Psoas muscle (tissue), 8 donors: ENCODE measurements at regions of chr13 and their contacts with region 1.

Region 1: GRCh38 chr13:77079902-77080413 is 53.0 kb upstream of the FBXL3 start:
- DNase-seq: no peak
- ATAC-seq: no peak
- H3K4me3 ChIP-seq: no peak overlapping the region
- H3K27ac ChIP-seq: no peak overlapping the region
- H3K4me1 ChIP-seq: no peaks in the 10 kb centered on the region
- H3K27me3 ChIP-seq: no peaks in the 10 kb centered on the region
- CTCF ChIP-seq: no peak

Region 2: DNA sequence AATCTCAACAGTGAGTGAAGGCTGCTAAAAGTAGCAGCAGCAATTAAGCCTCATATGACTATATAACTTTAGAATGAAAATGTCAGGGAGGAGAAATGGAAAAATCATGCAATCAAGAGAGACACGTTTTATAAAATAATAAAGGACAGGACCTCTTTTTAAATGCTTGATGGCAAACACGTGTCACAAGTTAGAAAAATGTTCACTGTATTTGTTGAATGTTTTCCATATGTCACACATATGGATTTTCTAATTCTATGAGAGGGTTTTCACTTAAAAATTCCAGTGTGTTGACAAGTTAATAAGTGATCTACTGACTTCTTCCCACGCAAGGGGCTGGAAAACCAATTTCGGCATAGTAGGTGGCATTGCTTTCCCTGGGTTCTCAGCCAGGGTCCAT is 166.1 kb before region 1 on chr13:
- intact Hi-C with region 1: no loop called
- DNase-seq: no peak
- ATAC-seq: no peak
- H3K4me3 ChIP-seq: no peak overlapping the region
- H3K27ac ChIP-seq: no peak overlapping the region
- H3K4me1 ChIP-seq: no peaks in the 10 kb centered on the region
- H3K27me3 ChIP-seq: peaks cover 0 to 2% (median 0%) of the 10 kb centered on the region in 3 donors
- CTCF ChIP-seq: no peak

Region 3: DNA sequence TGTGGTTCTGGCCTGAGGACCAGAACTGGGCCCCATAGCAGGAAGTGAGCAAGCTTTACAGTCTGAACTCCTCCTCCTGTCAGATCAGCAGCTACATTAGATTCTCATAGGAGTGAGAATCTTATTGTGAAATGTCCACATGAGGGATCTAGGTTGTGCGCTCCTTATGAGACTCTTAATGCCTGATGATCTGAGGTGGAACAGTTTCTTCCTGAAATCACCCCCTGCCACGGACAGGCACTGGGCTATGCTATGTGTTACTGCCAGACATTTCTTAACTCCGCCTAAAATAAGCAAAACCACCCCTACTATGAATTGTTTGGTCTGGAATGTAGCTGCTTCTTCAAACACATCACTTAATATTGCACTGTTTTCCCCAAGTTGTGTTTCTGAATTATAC is 57.6 kb before region 1 on chr13:
- intact Hi-C with region 1: no loop called
- DNase-seq: no peak
- ATAC-seq: peak in 1 of 4 donors; percentile 4
- H3K4me3 ChIP-seq: no peak overlapping the region
- H3K27ac ChIP-seq: peak overlapping the region; percentile 51
- H3K4me1 ChIP-seq: peaks cover 69% of the 10 kb centered on the region
- H3K27me3 ChIP-seq: no peaks in the 10 kb centered on the region
- CTCF ChIP-seq: no peak

Region 4: GRCh38 chr13:77168237-77168636 is 88.3 kb after region 1 on chr13:
- intact Hi-C with region 1: loop called in 1 of 2 experiments (anchors 10 kb)
- DNase-seq: no peak
- ATAC-seq: no peak
- H3K4me3 ChIP-seq: no peak overlapping the region
- H3K27ac ChIP-seq: no peak overlapping the region
- H3K4me1 ChIP-seq: no peaks in the 10 kb centered on the region
- H3K27me3 ChIP-seq: no peaks in the 10 kb centered on the region
- CTCF ChIP-seq: no peak

Region 5: DNA sequence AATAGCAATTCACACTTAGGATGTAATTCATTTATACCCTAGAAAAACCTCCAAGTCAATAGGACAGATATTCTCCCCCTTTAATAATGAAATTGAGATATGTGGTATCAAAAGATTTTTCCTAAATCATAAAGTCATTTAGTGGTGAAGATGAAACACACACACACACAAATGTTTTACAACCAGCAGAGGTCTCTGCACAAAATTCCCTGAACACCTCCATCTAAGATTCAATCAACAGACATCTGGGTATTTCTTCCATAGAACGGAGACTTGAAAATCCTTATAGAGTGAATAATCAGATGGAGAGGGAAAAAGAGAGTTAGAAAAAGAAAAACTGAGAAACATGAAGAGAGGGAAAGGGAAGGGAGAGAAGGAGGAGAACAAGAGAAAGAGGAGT is 194.2 kb after region 1 on chr13:
- intact Hi-C with region 1: no loop called
- DNase-seq: no peak
- ATAC-seq: no peak
- H3K4me3 ChIP-seq: no peak overlapping the region
- H3K27ac ChIP-seq: no peak overlapping the region
- H3K4me1 ChIP-seq: no peaks in the 10 kb centered on the region
- H3K27me3 ChIP-seq: no peaks in the 10 kb centered on the region
- CTCF ChIP-seq: no peak